Sciatic nerve (tissue), 2 donors: ENCODE measurements at regions of chr9 and their contacts with region 1.

Region 1: DNA sequence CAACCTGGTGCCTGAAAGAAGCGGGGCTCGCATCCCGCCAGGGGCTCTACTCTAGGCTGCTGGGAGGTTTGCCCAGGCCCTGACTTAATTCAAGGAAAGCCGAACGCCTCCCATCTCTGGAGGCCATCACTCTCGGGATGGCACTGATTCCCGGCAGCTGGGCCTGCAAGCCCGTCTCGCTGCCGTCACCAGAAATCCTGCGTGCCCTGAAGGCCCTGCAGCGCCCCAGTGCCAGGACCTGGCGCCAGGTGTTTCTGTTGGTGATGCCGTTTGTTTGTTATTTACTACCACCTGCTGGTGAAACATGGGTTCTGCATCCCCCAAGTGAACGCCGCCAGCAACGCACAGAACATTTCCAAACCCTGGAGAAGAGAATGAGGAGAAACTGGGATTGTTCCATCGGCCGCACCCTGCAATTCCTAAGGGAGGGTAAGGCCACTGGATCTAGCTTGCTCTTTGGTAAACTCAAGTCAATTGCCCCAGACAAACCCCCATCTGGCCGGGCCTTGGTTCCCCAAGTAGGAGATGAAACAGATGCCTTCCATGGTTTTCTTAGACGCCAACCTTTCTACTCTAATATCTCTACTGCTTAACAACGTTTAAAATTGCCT is 77.9 kb downstream of the AK8 start:
- DNase-seq: peak; percentile 84
- ATAC-seq: peak; percentile 18

Region 2: GRCh38 chr9:132509928-132510874 is 289.9 kb before region 1 on chr9:
- intact Hi-C with region 1: loop called (anchors 10 kb)
- DNase-seq: no peak
- ATAC-seq: no peak

Region 3: GRCh38 chr9:132631303-132632084 is 168.6 kb before region 1 on chr9:
- intact Hi-C with region 1: no loop called
- DNase-seq: no peak
- ATAC-seq: no peak